IMR-90 (cell line): ENCODE measurements at regions of chr9 and their contacts with region 1.

Region 1: GRCh38 chr9:18208154-18209059 is 265.5 kb upstream of the ADAMTSL1 start:
- DNase-seq: peak; percentile 12
- ATAC-seq: no peak
- H3K4me3 ChIP-seq: no peak overlapping the region
- H3K27ac ChIP-seq: no peak overlapping the region
- H3K4me1 ChIP-seq: no peaks in the 10 kb centered on the region
- H3K27me3 ChIP-seq: peaks cover 4% of the 10 kb centered on the region; the same call in 1 of the 2 replicates
- CTCF ChIP-seq: peak; percentile 39
- POLR2A ChIP-seq: no peak
- RAD21 ChIP-seq: peak; percentile 34; the same call in 1 of the 2 replicates

Region 2: DNA sequence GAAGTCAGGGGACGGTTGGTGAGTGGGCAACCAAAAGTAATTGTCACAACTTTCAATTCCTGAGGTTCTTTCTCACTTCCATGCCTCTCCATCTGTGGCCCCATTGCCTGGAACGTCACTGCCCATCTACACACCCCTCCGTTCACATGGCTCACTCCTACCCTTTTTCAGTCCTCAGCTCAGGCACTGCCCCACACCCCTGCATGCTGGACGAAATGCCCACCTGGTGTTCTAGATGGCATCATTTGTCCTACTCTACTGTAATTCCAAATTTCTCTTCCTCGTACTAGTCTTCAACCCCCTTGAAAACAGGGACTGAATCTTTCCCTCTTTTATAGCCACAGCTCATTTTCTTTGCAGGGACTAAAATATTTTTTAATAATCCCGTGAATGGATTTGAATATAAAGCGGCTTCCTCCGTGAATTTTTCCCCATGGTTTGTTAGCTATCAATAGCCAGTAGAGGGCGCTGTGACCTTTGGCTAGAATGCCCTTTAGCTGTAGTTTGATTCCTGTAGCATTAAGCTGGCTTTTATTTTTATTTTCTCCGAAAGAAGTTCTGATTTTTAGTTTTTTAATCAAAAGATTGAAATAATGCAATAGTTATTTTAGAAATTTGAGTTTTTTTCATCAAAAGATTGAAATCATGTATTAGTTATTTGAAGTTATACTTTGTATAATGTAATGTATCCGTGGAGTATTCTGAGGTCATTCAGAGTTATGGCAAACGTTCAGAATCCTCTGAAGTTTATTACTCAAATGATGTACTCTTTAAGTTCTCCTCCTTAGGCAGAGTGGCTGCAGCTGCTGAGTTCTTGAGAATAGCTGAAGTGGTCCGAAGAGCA is 397.5 kb before region 1 on chr9:
- CTCF ChIA-PET with region 1: interaction called, 21 read pairs
- POLR2A ChIA-PET with region 1: interaction called, 3 read pairs
- dilution Hi-C with region 1: no loop called
- in situ Hi-C with region 1: loop called (anchors 5 kb)
- intact Hi-C with region 1: loop called (anchors 1 kb)
- DNase-seq: peak; percentile 66
- ATAC-seq: peak; percentile 87
- H3K4me3 ChIP-seq: no peak overlapping the region
- H3K27ac ChIP-seq: no peak overlapping the region
- H3K4me1 ChIP-seq: no peaks in the 10 kb centered on the region
- H3K27me3 ChIP-seq: peaks cover 3% of the 10 kb centered on the region
- CTCF ChIP-seq: peak; percentile 91
- POLR2A ChIP-seq: no peak
- RAD21 ChIP-seq: peak; percentile 91

Region 3: GRCh38 chr9:18849890-18850677 is 641.7 kb after region 1 on chr9:
- CTCF ChIA-PET with region 1: no interaction called
- POLR2A ChIA-PET with region 1: no interaction called
- dilution Hi-C with region 1: no loop called
- in situ Hi-C with region 1: no loop called
- intact Hi-C with region 1: no loop called
- DNase-seq: no peak
- ATAC-seq: no peak
- H3K4me3 ChIP-seq: no peak overlapping the region
- H3K27ac ChIP-seq: no peak overlapping the region
- H3K4me1 ChIP-seq: no peaks in the 10 kb centered on the region
- H3K27me3 ChIP-seq: no peaks in the 10 kb centered on the region
- CTCF ChIP-seq: no peak
- POLR2A ChIP-seq: no peak
- RAD21 ChIP-seq: no peak